Head of caudate nucleus (tissue), 42 donors: ENCODE measurements at regions of chr5 and their contacts with region 1.

Region 1: GRCh38 chr5:74919487-74919886 is 53.3 kb upstream of the FAM169A start:
- DNase-seq: peak in 17 of 42 donors; percentile 8 to 63 (median 23)

Region 2: GRCh38 chr5:74673011-74673790 is 246.3 kb before region 1 on chr5:
- intact Hi-C with region 1: loop called (anchors 2 kb)
- DNase-seq: peak; percentile 15 to 84 (median 62)

Region 3: DNA sequence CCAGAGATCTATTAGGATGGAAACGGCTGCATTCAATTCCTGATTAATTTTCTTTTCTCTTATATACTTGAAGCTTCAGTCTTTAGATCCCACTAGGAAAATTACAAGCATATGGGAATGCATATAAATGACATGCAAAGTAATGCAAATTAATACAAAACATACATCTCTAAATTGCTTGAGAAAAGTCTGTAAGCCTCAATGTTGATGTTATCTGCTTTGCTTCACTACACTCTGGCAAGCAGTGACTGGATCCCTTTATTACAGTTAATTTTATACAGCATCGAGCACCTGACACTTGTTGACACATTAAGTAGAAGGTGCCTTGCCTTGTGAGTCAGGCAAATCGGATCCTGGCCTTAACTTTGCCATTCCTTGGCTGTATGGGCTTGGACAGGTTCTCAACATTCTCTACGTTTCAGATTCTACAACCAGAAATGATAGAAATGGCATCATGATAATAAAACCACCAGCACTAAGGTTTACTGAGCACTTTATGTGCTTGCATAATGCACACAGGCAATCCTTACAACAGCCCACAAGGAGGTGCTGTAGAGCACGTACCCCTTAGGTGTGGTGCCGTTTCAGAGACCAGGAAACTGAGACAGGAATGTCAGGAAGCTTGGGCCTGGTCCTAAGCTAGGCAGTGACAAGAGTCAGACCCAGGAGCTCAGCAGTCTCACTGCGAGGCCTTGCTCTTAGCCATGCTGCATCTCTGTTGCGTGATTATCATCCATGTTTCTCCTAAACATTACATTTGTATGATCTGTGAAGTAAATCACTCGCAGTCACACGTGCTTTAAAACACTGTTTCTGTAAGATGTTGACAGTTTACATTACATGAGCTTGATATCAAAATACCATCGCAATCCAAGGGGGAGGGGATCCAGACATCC is 130.2 kb after region 1 on chr5:
- intact Hi-C with region 1: no loop called
- DNase-seq: peak in 32 of 42 donors; percentile 15 to 77 (median 44)